Activated CD4-positive, alpha-beta T cell treated with anti-CD3 and anti-CD28 coated beads, Interleukin-2, amount 10 ng/mL, durations not matched to agents 24 days and 14 days (primary cell): ENCODE measurements at regions of chr6 and their contacts with region 1.

Region 1: GRCh38 chr6:127855542-127856159 is 45.2 kb downstream of the THEMIS start:
- DNase-seq: peak; percentile 79
- H3K4me3 Mint-ChIP-seq: no peak overlapping the region
- H3K27ac Mint-ChIP-seq: peak overlapping the region; percentile 42
- H3K4me1 Mint-ChIP-seq: peaks cover 37% of the 10 kb centered on the region
- H3K27me3 Mint-ChIP-seq: no peaks in the 10 kb centered on the region

Region 2: DNA sequence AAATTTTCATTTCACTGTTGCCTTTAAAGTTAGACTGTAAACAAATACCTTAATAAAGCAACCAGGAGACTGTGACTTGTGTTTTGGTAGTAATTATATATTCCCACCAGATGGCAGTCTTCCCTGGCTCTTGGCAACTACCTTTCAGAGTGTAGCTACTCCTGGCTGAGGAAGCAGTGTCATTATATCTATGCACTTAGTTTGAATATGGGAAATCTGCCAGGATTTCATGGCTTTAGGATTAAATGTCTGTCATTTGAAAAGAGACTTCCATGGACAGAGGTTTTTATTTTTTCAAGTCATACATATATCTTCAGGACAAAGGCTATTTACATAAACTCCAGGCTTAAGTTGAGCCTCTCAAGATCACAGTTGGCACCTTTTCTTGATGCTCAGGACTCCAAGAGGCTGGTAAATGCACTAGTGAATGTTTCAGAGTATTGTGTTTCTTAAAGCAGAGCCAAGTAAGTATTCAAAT is 118.6 kb before region 1 on chr6:
- intact Hi-C with region 1: loop called (anchors 2 kb)
- DNase-seq: peak; percentile 82
- H3K4me3 Mint-ChIP-seq: no peak overlapping the region
- H3K27ac Mint-ChIP-seq: peak overlapping the region; percentile 25
- H3K4me1 Mint-ChIP-seq: peaks cover 12% of the 10 kb centered on the region
- H3K27me3 Mint-ChIP-seq: no peaks in the 10 kb centered on the region

Region 3: GRCh38 chr6:127900935-127901334 is 45.3 kb after region 1 on chr6 and contains the start of gene THEMIS:
- intact Hi-C with region 1: loop called (anchors 5 kb)
- DNase-seq: peak; percentile 88
- H3K4me3 Mint-ChIP-seq: peak within 1 kb of the TSS; percentile 90
- H3K27ac Mint-ChIP-seq: peak within 1 kb of the TSS; percentile 95
- H3K4me1 Mint-ChIP-seq: peaks cover 51% of the 10 kb centered on the region
- H3K27me3 Mint-ChIP-seq: no peaks in the 10 kb centered on the region
- total RNA-seq, gene THEMIS: 14.3 and 15.3 TPM in 2 replicates

Region 4: DNA sequence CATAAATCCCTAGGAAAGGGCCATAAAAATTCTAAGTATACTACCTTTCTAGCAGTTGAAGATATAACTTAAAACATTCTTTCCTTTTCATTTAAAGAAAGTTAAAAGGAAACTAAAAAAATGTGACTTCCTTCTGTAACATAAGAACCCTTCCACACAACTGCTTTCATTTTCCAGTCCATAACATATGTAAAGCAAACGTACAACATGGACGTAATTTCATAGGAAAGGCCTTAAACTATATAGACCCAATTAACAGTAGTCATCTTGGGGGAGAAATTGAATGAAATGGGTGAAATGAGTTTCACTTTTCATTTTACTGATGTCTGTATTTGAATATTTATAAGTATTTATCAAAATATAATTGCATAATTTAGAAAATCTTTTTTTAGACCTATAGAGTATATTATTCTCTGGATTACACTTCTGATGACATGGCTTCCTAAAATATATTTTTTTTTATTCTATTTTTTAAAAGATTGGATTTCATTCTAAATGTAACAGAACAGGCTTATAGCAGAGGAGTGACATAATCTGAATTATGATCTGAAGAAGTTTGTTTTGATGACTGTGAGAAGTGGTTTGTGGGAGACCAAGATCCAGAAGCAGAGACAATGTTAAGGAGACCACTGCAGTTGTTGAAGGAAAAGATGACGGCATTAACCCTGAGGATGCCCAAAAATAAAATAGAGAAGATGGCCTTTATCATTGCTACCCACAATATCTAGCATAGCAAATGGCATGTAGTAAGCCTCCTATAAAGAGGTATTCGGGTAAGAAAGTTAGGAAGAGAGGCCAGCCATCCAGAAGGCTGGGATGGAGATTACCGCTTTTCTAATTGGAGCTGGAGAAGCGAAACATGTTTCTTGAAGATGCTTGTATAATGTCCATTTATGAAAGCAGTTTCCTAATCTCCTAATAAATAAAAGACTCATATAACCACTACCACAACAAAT is 404.4 kb after region 1 on chr6:
- intact Hi-C with region 1: loop called (anchors 5 kb)
- DNase-seq: no peak
- H3K4me3 Mint-ChIP-seq: peak overlapping the region; percentile 48
- H3K27ac Mint-ChIP-seq: peak overlapping the region; percentile 69
- H3K4me1 Mint-ChIP-seq: peaks cover 22% of the 10 kb centered on the region
- H3K27me3 Mint-ChIP-seq: peaks cover 2% of the 10 kb centered on the region

Region 5: GRCh38 chr6:128520436-128521281 is 665.0 kb after region 1 on chr6 and contains the start of gene PTPRK:
- intact Hi-C with region 1: loop called (anchors 10 kb)
- DNase-seq: peak; percentile 96
- H3K4me3 Mint-ChIP-seq: peak within 1 kb of the TSS; percentile 96
- H3K27ac Mint-ChIP-seq: peak within 1 kb of the TSS; percentile 84
- H3K4me1 Mint-ChIP-seq: peaks cover 19% of the 10 kb centered on the region
- H3K27me3 Mint-ChIP-seq: peaks cover 75% of the 10 kb centered on the region
- total RNA-seq, gene PTPRK: 3.6 and 5.4 TPM in 2 replicates

Region 6: GRCh38 chr6:128754658-128755256 is 899.1 kb after region 1 on chr6:
- intact Hi-C with region 1: no loop called
- DNase-seq: no peak
- H3K4me3 Mint-ChIP-seq: no peak overlapping the region
- H3K27ac Mint-ChIP-seq: no peak overlapping the region
- H3K4me1 Mint-ChIP-seq: no peaks in the 10 kb centered on the region
- H3K27me3 Mint-ChIP-seq: peaks cover 2% of the 10 kb centered on the region